Psoas muscle (tissue), 8 donors: ENCODE measurements at regions of chr12 and their contacts with region 1.

Region 1: GRCh38 chr12:56189176-56189917 is at the start of gene SMARCC2:
- DNase-seq: peak; percentile 88 to 95
- ATAC-seq: peak; percentile 87 to 91 (median 90)
- H3K4me3 ChIP-seq: peak within 1 kb of the TSS; percentile 83
- H3K27ac ChIP-seq: peak within 1 kb of the TSS; percentile 91
- H3K4me1 ChIP-seq: peaks cover 18% of the 10 kb centered on the region
- H3K27me3 ChIP-seq: no peaks in the 10 kb centered on the region
- CTCF ChIP-seq: peak; percentile 83
- total RNA-seq, gene SMARCC2: 49.8 to 78.7 (median 69.7) TPM

Region 2: GRCh38 chr12:56117778-56118687 is 71.3 kb before region 1 on chr12 and contains the start of gene ZC3H10:
- intact Hi-C with region 1: loop called (anchors 1 to 2 kb)
- DNase-seq: peak; percentile 97 to 98
- ATAC-seq: peak; percentile 80 to 86 (median 82)
- H3K4me3 ChIP-seq: peak within 1 kb of the TSS; percentile 81
- H3K27ac ChIP-seq: peak within 1 kb of the TSS; percentile 95
- H3K4me1 ChIP-seq: peaks cover 44% of the 10 kb centered on the region
- H3K27me3 ChIP-seq: no peaks in the 10 kb centered on the region
- CTCF ChIP-seq: peak; percentile 52
- total RNA-seq, gene ZC3H10: 5.0 to 10.3 (median 6.6) TPM

Region 3: DNA sequence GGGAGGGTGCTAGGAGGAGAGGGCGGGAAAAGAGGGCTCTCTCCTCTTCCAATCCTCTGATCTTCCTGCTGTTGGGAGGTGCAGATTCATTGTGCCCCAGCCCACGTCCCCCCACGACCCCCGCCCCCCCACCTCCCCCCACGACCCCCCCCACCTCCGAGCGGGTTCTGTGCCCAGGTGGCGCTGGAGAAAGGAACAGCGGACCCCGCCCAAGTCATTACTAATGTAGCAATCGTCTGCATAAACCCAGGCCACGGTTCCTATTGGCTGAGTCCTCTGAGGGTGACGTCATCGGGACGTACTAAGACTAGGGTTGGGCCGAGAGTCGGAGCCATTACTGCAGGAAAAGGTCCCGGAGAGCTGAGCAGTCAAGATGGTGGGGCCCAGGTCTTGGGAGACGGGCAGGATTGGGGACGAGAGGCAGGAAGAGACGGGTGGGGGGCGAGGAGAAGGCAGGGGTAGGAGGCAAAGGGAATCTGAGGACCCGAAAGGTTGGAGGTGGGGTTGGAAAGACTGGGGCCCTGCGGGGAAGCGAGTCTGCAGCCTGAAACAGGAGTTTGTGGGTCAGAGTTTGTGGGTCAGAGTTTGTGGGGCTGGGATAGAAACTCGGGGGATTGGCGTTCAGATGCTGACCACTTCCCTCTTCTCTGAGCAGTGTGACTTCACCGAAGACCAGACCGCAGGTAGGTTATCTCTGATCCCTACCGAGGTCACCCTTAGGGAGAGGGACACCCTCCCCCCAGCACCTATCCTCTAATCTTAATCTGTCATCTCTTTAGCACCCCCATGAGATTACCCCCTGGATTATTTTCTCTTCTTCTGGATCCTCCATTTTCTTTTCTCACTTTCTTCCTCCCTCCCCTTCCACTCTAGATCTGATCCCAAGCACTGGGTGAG is 31.1 kb before region 1 on chr12 and contains the start of gene MYL6:
- intact Hi-C with region 1: loop called in 1 of 2 experiments (anchors 2 kb)
- DNase-seq: peak; percentile 92 to 96
- ATAC-seq: peak; percentile 83 to 91 (median 87)
- H3K4me3 ChIP-seq: peak within 1 kb of the TSS; percentile 95
- H3K27ac ChIP-seq: peak within 1 kb of the TSS; percentile 94
- H3K4me1 ChIP-seq: peaks cover 30% of the 10 kb centered on the region
- H3K27me3 ChIP-seq: no peaks in the 10 kb centered on the region
- CTCF ChIP-seq: no peak
- total RNA-seq, gene MYL6: 216 to 395 (median 291) TPM

Region 4: DNA sequence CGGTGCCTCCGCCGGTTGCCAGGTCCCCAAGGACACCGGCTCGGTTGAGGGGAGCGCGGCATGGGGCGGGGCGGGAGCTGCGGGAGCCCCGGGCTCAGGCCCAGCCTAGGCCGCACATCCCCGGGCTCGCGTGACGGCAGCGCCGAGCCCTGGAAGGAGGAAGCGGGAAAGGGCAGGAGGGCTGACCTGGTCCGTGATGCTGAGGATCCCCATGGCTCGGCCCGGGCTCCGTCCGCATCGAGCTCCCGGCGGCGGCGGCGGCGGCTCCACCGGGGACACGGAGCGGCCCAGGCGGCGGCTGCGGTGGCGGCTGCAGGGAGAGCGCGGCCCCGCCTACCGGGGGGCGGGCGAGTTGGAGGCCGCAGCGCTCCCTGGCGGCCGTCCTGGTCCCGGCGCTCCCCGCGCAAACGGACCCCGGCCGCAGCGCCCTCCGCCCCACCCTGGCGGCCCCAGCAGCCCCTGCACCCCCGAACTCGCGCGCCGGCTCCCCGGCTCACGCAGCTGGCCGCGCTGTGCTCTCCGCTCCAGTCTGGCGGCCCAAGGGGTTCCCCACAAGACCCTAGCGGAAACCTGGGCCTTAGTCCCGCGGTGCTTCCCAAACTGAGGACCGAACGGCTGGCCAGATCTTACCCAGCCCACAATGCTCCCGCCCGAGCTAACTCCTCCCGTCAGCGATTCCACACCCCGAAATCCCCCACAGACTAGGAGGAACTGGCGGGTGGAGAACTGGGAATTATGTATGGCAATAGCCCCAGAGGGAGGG is 68.9 kb after region 1 on chr12 and contains the start of gene ANKRD52:
- intact Hi-C with region 1: loop called in 1 of 2 experiments (anchors 5 kb)
- DNase-seq: peak; percentile 82 to 85
- ATAC-seq: peak; percentile 71 to 84 (median 79)
- H3K4me3 ChIP-seq: peak within 1 kb of the TSS; percentile 97
- H3K27ac ChIP-seq: peak within 1 kb of the TSS; percentile 89
- H3K4me1 ChIP-seq: peaks cover 42% of the 10 kb centered on the region
- H3K27me3 ChIP-seq: no peaks in the 10 kb centered on the region
- CTCF ChIP-seq: peak; percentile 83
- total RNA-seq, gene ANKRD52: 14.2 to 37.5 (median 21.5) TPM

Region 5: GRCh38 chr12:56468216-56469006 is 279.1 kb after region 1 on chr12 and contains the start of gene SPRYD4:
- intact Hi-C with region 1: loop called (anchors 2 to 5 kb)
- DNase-seq: peak; percentile 93 to 97
- ATAC-seq: peak; percentile 97 to 98 (median 98)
- H3K4me3 ChIP-seq: peak within 1 kb of the TSS; percentile 81
- H3K27ac ChIP-seq: peak within 1 kb of the TSS; percentile 90
- H3K4me1 ChIP-seq: peaks cover 7% of the 10 kb centered on the region
- H3K27me3 ChIP-seq: no peaks in the 10 kb centered on the region
- CTCF ChIP-seq: peak; percentile 11
- total RNA-seq, gene SPRYD4: 2.8 to 4.4 (median 3.7) TPM